OCI-LY7 (cell line): ENCODE measurements at regions of chr3 and their contacts with region 1.

Region 1: GRCh38 chr3:56342475-56342874 is 125.8 kb downstream of the ERC2 start:
- DNase-seq: no peak
- H3K4me3 ChIP-seq: no peak overlapping the region
- H3K27ac ChIP-seq: no peak overlapping the region
- H3K4me1 ChIP-seq: no peaks in the 10 kb centered on the region
- CTCF ChIP-seq: no peak

Region 2: GRCh38 chr3:56453011-56453410 is 110.5 kb after region 1 on chr3:
- CTCF ChIA-PET with region 1: no interaction called
- POLR2A ChIA-PET with region 1: no interaction called
- intact Hi-C with region 1: loop called (anchors 5 kb)
- DNase-seq: no peak
- H3K4me3 ChIP-seq: no peak overlapping the region
- H3K27ac ChIP-seq: no peak overlapping the region
- H3K4me1 ChIP-seq: no peaks in the 10 kb centered on the region
- CTCF ChIP-seq: 0 out of 2 replicates have a peak, but pooled peaks have one; percentile 27